ENCODE measurements at regions of chr9 and their contacts with region 1.

Region 1: GRCh38 chr9:131478421-131478868 is 24.3 kb upstream of the POMT1 start:
- DNase-seq: peak; percentile 49 to 60
- ATAC-seq: no peak
- H3K4me3 ChIP-seq: no peak overlapping the region
- H3K27ac ChIP-seq: no peak overlapping the region
- H3K4me1 ChIP-seq: peaks cover 27% of the 10 kb centered on the region
- H3K27me3 ChIP-seq: no peaks in the 10 kb centered on the region
- CTCF ChIP-seq: peak; percentile 50

Region 2: GRCh38 chr9:131349881-131350563 is 128.4 kb before region 1 on chr9:
- intact Hi-C with region 1: loop called (anchors 2 to 5 kb)
- DNase-seq: peak; percentile 89 to 94
- ATAC-seq: peak; percentile 85 to 95 (median 86)
- H3K4me3 ChIP-seq: peak overlapping the region; percentile 53
- H3K27ac ChIP-seq: no peak overlapping the region
- H3K4me1 ChIP-seq: peaks cover 17% of the 10 kb centered on the region
- H3K27me3 ChIP-seq: no peaks in the 10 kb centered on the region
- CTCF ChIP-seq: peak; percentile 85

Region 3: GRCh38 chr9:131366761-131367401 is 111.6 kb before region 1 on chr9:
- intact Hi-C with region 1: loop called in 1 of 2 experiments (anchors 5 kb)
- DNase-seq: no peak
- ATAC-seq: peak; percentile 52 to 71 (median 66)
- H3K4me3 ChIP-seq: no peak overlapping the region
- H3K27ac ChIP-seq: no peak overlapping the region
- H3K4me1 ChIP-seq: peaks cover under 1% of the 10 kb centered on the region
- H3K27me3 ChIP-seq: no peaks in the 10 kb centered on the region
- CTCF ChIP-seq: peak; percentile 21

Region 4: GRCh38 chr9:131393622-131394463 is 84.6 kb before region 1 on chr9 and contains the start of gene PRRC2B:
- intact Hi-C with region 1: loop called in 1 of 2 experiments (anchors 5 kb)
- DNase-seq: peak; percentile 91 to 93
- ATAC-seq: peak; percentile 87 to 89 (median 88)
- H3K4me3 ChIP-seq: peak within 1 kb of the TSS; percentile 76
- H3K27ac ChIP-seq: peak within 1 kb of the TSS; percentile 95
- H3K4me1 ChIP-seq: peaks cover 45% of the 10 kb centered on the region
- H3K27me3 ChIP-seq: no peaks in the 10 kb centered on the region
- CTCF ChIP-seq: peak; percentile 58
- total RNA-seq, gene PRRC2B: 63.6 to 114 (median 78.7) TPM

Region 5: GRCh38 chr9:132026932-132027585 is 548.6 kb after region 1 on chr9:
- intact Hi-C with region 1: no loop called
- DNase-seq: no peak
- ATAC-seq: no peak
- H3K4me3 ChIP-seq: no peak overlapping the region
- H3K27ac ChIP-seq: no peak overlapping the region
- H3K4me1 ChIP-seq: peaks cover 8% of the 10 kb centered on the region
- H3K27me3 ChIP-seq: no peaks in the 10 kb centered on the region
- CTCF ChIP-seq: no peak

Region 6: GRCh38 chr9:132144708-132145365 is 666.4 kb after region 1 on chr9:
- intact Hi-C with region 1: no loop called
- DNase-seq: no peak
- ATAC-seq: no peak
- H3K4me3 ChIP-seq: no peak overlapping the region
- H3K27ac ChIP-seq: no peak overlapping the region
- H3K4me1 ChIP-seq: peaks cover 6% of the 10 kb centered on the region
- H3K27me3 ChIP-seq: peaks cover 0 to 38% (median 0%) of the 10 kb centered on the region in 3 donors
- CTCF ChIP-seq: no peak

Measured in psoas muscle (tissue), 8 donors.